ENCODE measurements at regions of chr6 and their contacts with region 1.

Region 1: DNA sequence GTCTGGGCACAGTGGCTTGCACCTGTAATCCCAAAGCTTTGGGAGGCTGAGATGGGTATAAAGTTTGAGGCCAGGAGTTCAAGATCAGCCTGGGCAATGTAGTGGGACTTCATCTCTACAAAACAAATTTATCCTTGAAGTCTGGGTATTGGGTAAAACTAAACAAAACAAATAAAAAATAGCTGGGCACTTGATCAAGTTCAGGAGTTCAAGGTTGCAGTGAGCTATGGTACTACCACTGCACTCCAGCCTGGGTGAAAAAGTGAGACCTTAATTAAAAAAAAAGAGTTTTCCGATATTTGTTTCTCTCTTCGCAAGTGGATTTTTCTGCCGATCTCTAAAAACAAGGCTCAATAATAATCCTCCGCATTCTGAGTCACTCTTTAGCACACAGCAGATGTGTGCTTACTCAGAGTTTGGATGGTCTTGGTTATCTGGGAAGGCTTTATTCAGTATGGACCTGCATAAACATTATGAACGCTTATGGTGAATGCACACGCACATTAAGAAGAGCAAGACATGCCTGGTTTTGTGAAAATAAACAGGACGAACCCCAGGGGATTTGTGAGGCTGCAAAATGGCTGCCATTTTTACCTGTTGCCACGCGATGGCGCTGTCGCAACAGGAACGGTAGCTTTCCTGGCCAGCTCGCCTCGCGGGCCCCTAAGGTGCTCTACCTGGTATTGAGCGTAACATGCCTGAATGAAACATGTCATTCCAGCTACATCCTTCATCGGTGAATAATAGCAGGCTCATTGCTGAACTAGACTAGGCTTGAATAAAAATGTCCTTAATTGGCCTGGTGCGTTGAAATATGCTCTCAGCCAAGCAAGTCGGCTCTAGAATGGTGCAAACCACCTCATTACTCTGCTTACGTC is 6.0 kb downstream of the OPN5 start:
- DNase-seq: peak; percentile 66
- H3K4me3 Mint-ChIP-seq: no peak overlapping the region
- H3K27ac Mint-ChIP-seq: no peak overlapping the region
- H3K4me1 Mint-ChIP-seq: no peaks in the 10 kb centered on the region
- H3K27me3 Mint-ChIP-seq: peaks cover 31% of the 10 kb centered on the region

Region 2: DNA sequence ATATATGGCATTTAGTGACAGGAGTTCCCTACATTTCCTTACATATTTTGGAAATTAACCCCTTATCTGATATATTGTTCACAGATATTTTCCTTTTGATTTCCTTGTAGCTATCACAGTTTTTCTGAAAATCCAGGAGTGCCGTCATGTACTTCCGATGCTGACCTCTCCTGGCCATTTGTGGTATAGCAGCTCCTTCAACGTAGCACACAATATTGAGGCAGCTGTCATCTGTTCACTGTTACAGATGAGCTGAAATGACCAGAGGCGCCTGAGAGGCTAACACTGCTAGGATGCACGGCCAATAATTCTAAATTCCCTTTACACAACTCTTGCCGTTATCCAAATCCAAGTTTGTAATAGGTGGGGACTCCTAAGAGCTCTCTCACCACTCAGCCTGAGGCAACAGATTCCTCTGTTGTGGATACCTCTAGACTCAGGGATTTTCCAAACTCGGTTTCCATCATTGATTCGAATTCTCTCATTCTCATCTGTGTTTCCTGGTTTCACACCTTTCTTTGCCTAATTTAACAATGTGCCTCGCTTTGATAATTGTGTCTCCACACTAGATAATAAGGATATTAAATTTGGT is 1622.2 kb after region 1 on chr6:
- CTCF ChIA-PET with region 1: interaction called, 36 read pairs
- DNase-seq: peak; percentile 74
- H3K4me3 Mint-ChIP-seq: no peak overlapping the region
- H3K27ac Mint-ChIP-seq: no peak overlapping the region
- H3K4me1 Mint-ChIP-seq: no peaks in the 10 kb centered on the region
- H3K27me3 Mint-ChIP-seq: peaks cover 4% of the 10 kb centered on the region